A673 (cell line): ENCODE measurements at regions of chr20 and their contacts with region 1.

Region 1: GRCh38 chr20:10469599-10469998 is 34.5 kb downstream of the SLX4IP start:
- DNase-seq: peak; percentile 96
- H3K4me3 ChIP-seq: peak overlapping the region; percentile 8
- H3K27ac ChIP-seq: peak overlapping the region; percentile 66
- H3K4me1 ChIP-seq: peaks cover 67% of the 10 kb centered on the region
- H3K27me3 ChIP-seq: no peaks in the 10 kb centered on the region
- CTCF ChIP-seq: peak; percentile 80

Region 2: GRCh38 chr20:10434467-10434831 is 35.1 kb before region 1 on chr20:
- CTCF ChIA-PET with region 1: no interaction called
- POLR2A ChIA-PET with region 1: no interaction called
- intact Hi-C with region 1: loop called (anchors 2 kb)
- DNase-seq: peak; percentile 99
- H3K4me3 ChIP-seq: peak overlapping the region; percentile 78
- H3K27ac ChIP-seq: peak overlapping the region; percentile 87
- H3K4me1 ChIP-seq: peaks cover 43% of the 10 kb centered on the region
- H3K27me3 ChIP-seq: no peaks in the 10 kb centered on the region
- CTCF ChIP-seq: no peak

Region 3: GRCh38 chr20:10536531-10536930 is 66.9 kb after region 1 on chr20:
- CTCF ChIA-PET with region 1: interaction called, 6 read pairs
- POLR2A ChIA-PET with region 1: interaction called, 5 read pairs
- intact Hi-C with region 1: loop called (anchors 1 kb)
- DNase-seq: no peak
- H3K4me3 ChIP-seq: no peak overlapping the region
- H3K27ac ChIP-seq: peak overlapping the region; percentile 48
- H3K4me1 ChIP-seq: peaks cover 47% of the 10 kb centered on the region
- H3K27me3 ChIP-seq: no peaks in the 10 kb centered on the region
- CTCF ChIP-seq: peak; percentile 65

Region 4: GRCh38 chr20:10603971-10604864 is 134.6 kb after region 1 on chr20:
- CTCF ChIA-PET with region 1: no interaction called
- POLR2A ChIA-PET with region 1: no interaction called
- intact Hi-C with region 1: no loop called
- DNase-seq: no peak
- H3K4me3 ChIP-seq: no peak overlapping the region
- H3K27ac ChIP-seq: no peak overlapping the region
- H3K4me1 ChIP-seq: peaks cover 6% of the 10 kb centered on the region
- H3K27me3 ChIP-seq: no peaks in the 10 kb centered on the region
- CTCF ChIP-seq: no peak

Region 5: DNA sequence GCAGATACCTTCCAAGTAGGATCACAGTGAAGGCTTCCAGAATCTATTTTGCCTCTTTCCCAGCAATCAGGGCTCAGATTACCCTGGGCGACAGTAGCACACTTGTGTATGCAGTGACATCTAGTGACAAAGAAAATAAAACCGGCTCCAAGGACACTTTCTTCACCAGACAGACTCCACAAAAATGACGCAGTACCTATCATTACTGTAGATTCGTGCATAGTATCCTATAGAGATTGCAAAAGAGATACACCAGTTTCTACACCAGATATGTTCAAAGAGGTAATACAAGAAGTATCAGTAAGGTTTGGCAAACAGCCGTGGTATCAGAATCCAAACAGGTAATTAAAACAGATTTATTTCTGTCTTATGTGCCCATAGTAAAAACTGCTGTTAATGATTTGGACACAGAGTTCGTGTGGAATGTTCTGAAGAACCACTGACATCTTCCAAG is 804.6 kb after region 1 on chr20:
- CTCF ChIA-PET with region 1: no interaction called
- POLR2A ChIA-PET with region 1: no interaction called
- intact Hi-C with region 1: loop called (anchors 2 kb)
- DNase-seq: peak; percentile 82
- H3K4me3 ChIP-seq: no peak overlapping the region
- H3K27ac ChIP-seq: no peak overlapping the region
- H3K4me1 ChIP-seq: peaks cover 35% of the 10 kb centered on the region
- H3K27me3 ChIP-seq: no peaks in the 10 kb centered on the region
- CTCF ChIP-seq: peak; percentile 81